B cell (primary cell): ENCODE measurements at regions of chr3 and their contacts with region 1.

Region 1: DNA sequence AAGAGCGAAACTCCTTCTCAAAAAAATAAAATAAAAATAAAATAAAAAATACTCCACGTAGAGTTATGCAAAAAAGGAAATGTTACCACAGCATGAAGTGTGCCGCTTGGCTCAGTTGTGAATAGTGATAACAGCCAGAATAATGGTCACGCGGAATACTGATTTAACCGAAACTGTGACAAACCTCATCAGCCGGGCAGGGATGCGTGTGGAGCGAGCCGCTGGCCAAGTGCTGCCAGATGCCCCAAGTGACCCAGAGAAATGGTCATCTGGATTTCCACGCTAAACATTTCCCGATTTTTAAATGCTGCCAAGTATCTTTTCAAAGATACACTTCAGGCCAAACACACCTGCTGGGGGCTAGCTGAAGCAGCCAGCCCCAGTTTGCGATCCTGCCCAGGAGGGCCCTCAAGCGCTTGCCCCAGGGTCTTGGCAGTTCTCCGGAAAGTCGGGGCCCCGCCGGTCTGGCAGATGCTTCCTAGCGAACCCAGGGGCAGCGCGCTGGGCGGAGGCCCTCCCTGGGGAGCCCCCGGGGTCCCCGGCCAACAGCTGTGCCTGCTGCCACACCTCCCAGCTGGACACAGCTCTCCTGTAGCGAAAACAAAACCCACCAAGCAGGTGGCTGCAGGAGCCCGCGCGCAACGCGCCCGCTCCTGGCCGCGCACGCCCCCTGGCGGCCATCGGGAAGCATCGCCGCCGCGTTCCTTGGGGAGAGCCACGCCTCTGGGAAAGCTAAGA is 35.1 kb downstream of the CMTM6 start:
- DNase-seq: peak; percentile 87
- ATAC-seq: peak; percentile 78
- H3K4me3 ChIP-seq: peak overlapping the region in 4 of 5 experiments; percentile 49 to 64 (median 58)
- H3K4me3 Mint-ChIP-seq: peak overlapping the region; percentile 77
- H3K27ac ChIP-seq: peak overlapping the region; percentile 70
- H3K27ac Mint-ChIP-seq: peak overlapping the region; percentile 85
- H3K4me1 ChIP-seq: peaks cover 29 to 44% of the 10 kb centered on the region in 2 donors
- H3K4me1 Mint-ChIP-seq: peaks cover 54% of the 10 kb centered on the region
- H3K27me3 ChIP-seq: no peaks in the 10 kb centered on the region
- H3K27me3 Mint-ChIP-seq: no peaks in the 10 kb centered on the region
- CTCF ChIP-seq: peak; percentile 98

Region 2: DNA sequence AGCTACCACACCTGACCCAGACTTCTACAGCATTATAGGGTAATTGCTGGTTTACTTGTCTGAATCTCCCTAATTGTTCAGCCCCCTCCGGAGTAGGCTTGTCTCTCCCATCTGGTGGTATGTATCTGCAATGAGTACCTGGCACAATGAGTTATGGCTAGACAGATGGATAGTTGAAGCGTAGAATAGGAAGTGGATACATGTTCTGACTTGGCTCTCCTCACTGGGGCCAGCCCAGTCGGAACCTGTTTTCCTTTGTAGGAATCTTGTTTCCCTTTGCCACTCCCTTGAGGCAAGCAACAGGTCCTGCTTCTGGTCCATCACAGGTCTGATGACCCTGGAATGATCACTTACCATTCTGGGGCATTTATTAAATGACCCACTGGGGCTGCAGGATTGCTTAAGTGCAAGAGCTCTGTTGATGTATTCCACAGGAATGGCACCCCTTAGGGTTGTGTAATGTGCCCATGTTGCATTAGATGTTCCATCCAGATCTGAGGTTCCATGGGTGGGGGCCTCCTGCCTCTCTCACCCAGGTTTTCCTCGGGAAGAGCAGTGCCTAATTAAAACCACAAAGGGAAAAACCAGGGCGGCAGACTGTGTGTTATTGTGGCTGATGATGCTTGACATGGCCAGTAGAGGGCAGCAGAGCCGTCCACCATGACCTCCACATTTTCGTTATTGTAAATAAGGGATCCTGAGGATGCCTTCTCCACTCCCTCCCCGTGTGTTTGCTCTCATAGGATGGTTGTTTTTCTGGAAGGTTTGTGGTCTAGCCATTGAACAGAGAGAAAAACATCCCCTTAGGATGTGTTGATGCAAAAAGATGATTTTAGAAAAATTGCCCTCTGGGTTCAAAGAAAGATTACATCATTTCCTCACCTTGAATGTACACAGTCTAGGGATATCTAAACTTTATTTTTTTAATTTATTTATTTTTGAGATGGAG is 171.0 kb before region 1 on chr3:
- CTCF ChIA-PET with region 1: interaction called, 69 read pairs
- POLR2A ChIA-PET with region 1: no interaction called
- intact Hi-C with region 1: loop called (anchors 1 kb)
- DNase-seq: peak; percentile 74
- ATAC-seq: peak; percentile 64
- H3K4me3 ChIP-seq: no peak overlapping the region
- H3K4me3 Mint-ChIP-seq: no peak overlapping the region
- H3K27ac ChIP-seq: no peak overlapping the region
- H3K27ac Mint-ChIP-seq: no peak overlapping the region
- H3K4me1 ChIP-seq: peaks cover 6 to 7% of the 10 kb centered on the region in 2 donors
- H3K4me1 Mint-ChIP-seq: peaks cover 5% of the 10 kb centered on the region
- H3K27me3 ChIP-seq: no peaks in the 10 kb centered on the region
- H3K27me3 Mint-ChIP-seq: peaks cover 3% of the 10 kb centered on the region
- CTCF ChIP-seq: peak; percentile 94

Region 3: GRCh38 chr3:32384938-32385337 is 82.6 kb before region 1 on chr3:
- CTCF ChIA-PET with region 1: interaction called, 23 read pairs
- POLR2A ChIA-PET with region 1: no interaction called
- intact Hi-C with region 1: no loop called
- DNase-seq: peak; percentile 76
- ATAC-seq: peak; percentile 21
- H3K4me3 ChIP-seq: no peak overlapping the region
- H3K4me3 Mint-ChIP-seq: no peak overlapping the region
- H3K27ac ChIP-seq: no peak overlapping the region
- H3K27ac Mint-ChIP-seq: no peak overlapping the region
- H3K4me1 ChIP-seq: peaks cover 13 to 21% of the 10 kb centered on the region in 2 donors
- H3K4me1 Mint-ChIP-seq: peaks cover 21% of the 10 kb centered on the region
- H3K27me3 ChIP-seq: no peaks in the 10 kb centered on the region
- H3K27me3 Mint-ChIP-seq: peaks cover 5% of the 10 kb centered on the region
- CTCF ChIP-seq: no peak

Region 4: DNA sequence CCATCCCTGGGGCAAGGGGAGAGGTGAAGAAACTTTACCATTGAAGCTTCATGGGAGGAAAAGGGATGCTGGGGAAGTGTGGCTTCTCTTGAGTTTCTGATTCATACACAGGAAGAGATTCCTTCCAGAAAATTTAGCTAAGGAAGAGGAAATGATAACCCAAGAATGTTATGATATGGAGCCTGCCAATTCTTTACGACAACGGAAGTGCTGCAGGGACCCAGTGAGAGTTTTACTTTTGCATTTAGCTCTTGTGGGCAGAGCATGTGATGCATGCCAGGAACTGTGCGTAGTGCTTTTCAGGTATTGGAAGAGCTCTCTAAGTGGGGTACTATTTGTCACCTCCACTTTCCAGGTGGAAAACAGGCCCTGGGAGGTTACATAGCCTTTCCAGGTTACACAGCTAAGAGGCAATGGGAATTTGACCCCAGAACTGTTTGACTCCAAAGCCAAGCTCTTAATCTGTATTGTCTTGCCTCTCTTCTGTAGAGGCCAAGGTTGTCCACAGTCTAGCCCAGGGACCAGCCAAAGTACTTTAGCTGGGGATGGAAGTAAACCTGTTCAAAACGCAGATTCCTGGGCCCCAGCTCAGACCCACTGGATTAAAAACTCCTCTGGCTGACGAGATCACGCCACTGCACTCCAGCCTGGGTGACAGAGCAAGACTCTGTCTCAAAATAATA is 52.8 kb before region 1 on chr3:
- CTCF ChIA-PET with region 1: interaction called, 55 read pairs
- POLR2A ChIA-PET with region 1: no interaction called
- intact Hi-C with region 1: no loop called
- DNase-seq: peak; percentile 63
- ATAC-seq: peak; percentile 87
- H3K4me3 ChIP-seq: no peak overlapping the region
- H3K4me3 Mint-ChIP-seq: peak overlapping the region; percentile 48
- H3K27ac ChIP-seq: peak overlapping the region; percentile 71 to 73
- H3K27ac Mint-ChIP-seq: peak overlapping the region; percentile 88
- H3K4me1 ChIP-seq: peaks cover 31 to 33% of the 10 kb centered on the region in 2 donors
- H3K4me1 Mint-ChIP-seq: peaks cover 61% of the 10 kb centered on the region
- H3K27me3 ChIP-seq: no peaks in the 10 kb centered on the region
- H3K27me3 Mint-ChIP-seq: no peaks in the 10 kb centered on the region
- CTCF ChIP-seq: no peak

Region 5: GRCh38 chr3:32438596-32439344 is 28.7 kb before region 1 on chr3:
- CTCF ChIA-PET with region 1: interaction called, 56 read pairs
- POLR2A ChIA-PET with region 1: interaction called, 3 read pairs
- intact Hi-C with region 1: no loop called
- DNase-seq: peak; percentile 83
- ATAC-seq: peak; percentile 85
- H3K4me3 ChIP-seq: peak overlapping the region in 1 of 5 experiments; percentile 18
- H3K4me3 Mint-ChIP-seq: peak overlapping the region; percentile 81
- H3K27ac ChIP-seq: peak overlapping the region; percentile 81 to 82
- H3K27ac Mint-ChIP-seq: peak overlapping the region; percentile 96
- H3K4me1 ChIP-seq: peaks cover 68 to 74% of the 10 kb centered on the region in 2 donors
- H3K4me1 Mint-ChIP-seq: peaks cover 78% of the 10 kb centered on the region
- H3K27me3 ChIP-seq: no peaks in the 10 kb centered on the region
- H3K27me3 Mint-ChIP-seq: no peaks in the 10 kb centered on the region
- CTCF ChIP-seq: no peak

Region 6: DNA sequence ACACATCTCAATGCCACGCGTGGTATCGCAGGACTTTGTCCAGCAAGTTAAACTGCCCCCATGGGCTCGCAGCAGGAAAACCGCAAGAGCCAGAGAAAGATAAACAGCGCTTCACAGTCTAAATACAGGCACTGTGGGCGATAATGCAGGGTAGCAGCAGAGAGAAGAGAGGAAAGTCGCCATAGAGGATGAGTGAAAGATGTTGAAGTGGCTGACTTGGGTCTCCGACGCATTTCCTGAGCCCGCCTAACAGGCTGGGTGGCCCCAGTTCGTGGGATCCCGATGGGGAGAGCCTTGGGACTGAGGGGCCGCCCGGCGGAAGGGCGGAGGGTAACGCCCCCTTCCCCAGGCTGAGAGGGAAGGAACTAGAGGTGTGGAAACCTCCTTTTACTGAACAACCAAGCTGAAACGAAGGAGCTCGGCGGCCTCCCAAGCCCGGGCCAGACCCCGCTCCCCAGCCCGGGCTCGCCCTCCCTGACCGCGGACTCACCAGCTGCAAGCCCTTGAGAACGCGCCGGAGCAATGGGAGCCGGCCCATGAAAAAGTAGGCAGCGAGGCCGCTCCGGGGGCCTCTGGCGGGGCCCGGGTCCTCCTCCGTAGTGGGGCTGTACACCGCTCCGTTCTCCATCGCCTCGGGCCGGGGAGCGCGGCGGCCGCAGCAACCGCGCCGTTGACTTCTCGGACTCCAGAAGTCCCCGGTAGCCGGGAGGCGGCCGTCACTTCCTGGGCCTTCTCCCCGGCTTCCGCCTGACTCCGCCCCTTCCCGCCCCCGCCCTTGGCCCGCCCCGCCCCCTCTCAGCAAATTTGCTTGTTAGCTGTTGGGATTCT is 34.8 kb after region 1 on chr3 and contains the start of gene CMTM6:
- CTCF ChIA-PET with region 1: interaction called, 11 read pairs
- POLR2A ChIA-PET with region 1: interaction called, 5 read pairs
- intact Hi-C with region 1: loop called (anchors 5 kb)
- DNase-seq: peak; percentile 86
- ATAC-seq: peak; percentile 83
- H3K4me3 ChIP-seq: peak within 1 kb of the TSS; percentile 82 to 99 (median 97)
- H3K4me3 Mint-ChIP-seq: peak within 1 kb of the TSS; percentile 90
- H3K27ac ChIP-seq: peak within 1 kb of the TSS; percentile 99
- H3K27ac Mint-ChIP-seq: peak within 1 kb of the TSS; percentile 93
- H3K4me1 ChIP-seq: peaks cover 26 to 29% of the 10 kb centered on the region in 2 donors
- H3K4me1 Mint-ChIP-seq: peaks cover 36% of the 10 kb centered on the region
- H3K27me3 ChIP-seq: no peaks in the 10 kb centered on the region
- H3K27me3 Mint-ChIP-seq: no peaks in the 10 kb centered on the region
- CTCF ChIP-seq: no peak
- total RNA-seq, gene CMTM6: 66.3 and 67.7 TPM in 2 replicates

Region 7: DNA sequence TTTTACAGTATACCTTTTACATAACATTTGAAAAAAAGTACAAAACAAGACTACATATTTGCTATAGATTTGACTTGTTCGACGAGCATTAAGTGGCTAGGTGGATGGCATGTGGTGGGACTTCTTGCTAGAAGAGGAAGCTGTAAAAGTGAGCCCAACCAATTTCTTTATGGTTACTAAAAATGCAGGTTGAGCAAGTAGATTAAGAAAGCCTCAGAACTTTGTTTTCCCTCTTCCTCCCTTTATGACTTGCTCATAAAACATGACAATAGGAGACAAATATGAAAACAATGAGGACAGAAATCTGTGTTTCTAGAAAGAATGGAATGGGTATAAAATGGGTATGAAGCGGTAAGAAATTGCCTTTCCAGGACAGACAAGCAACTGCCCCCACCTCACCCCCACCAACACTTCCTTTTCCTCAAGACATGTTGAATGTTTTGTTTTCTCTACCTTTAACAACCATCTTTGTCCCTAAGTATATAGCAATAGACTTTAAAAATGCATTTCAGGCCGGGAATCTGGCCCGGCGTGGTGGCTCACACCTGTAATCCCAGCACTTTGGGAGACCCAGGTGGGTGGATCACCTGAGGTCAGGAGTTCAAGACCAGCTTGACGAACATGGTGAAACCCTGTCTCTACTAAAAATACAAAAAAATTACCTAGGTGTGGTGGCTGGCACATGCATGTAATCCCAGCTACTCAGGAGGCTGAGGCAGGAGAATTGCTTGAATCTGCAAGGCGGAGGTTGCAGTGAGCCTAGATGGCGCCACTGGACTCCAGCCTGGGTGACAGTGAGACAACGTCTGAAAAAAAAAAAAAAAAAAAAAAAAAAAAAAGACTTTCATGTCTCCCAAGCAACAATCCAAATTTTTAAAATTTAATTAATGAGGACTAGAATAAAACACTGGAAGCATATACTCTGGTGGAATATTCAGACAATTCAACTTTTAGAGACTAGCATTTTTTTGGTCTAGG is 434.2 kb after region 1 on chr3:
- CTCF ChIA-PET with region 1: no interaction called
- POLR2A ChIA-PET with region 1: no interaction called
- intact Hi-C with region 1: no loop called
- DNase-seq: peak; percentile 16
- ATAC-seq: no peak
- H3K4me3 ChIP-seq: no peak overlapping the region
- H3K4me3 Mint-ChIP-seq: peak overlapping the region; percentile 60
- H3K27ac ChIP-seq: no peak overlapping the region
- H3K27ac Mint-ChIP-seq: no peak overlapping the region
- H3K4me1 ChIP-seq: no peaks in the 10 kb centered on the region
- H3K4me1 Mint-ChIP-seq: peaks cover 2% of the 10 kb centered on the region
- H3K27me3 ChIP-seq: peaks cover 0 to 6% (median 0%) of the 10 kb centered on the region in 4 experiments
- H3K27me3 Mint-ChIP-seq: peaks cover 20% of the 10 kb centered on the region
- CTCF ChIP-seq: no peak